ENCODE measurements at regions of chr3 and their contacts with region 1.

Region 1: DNA sequence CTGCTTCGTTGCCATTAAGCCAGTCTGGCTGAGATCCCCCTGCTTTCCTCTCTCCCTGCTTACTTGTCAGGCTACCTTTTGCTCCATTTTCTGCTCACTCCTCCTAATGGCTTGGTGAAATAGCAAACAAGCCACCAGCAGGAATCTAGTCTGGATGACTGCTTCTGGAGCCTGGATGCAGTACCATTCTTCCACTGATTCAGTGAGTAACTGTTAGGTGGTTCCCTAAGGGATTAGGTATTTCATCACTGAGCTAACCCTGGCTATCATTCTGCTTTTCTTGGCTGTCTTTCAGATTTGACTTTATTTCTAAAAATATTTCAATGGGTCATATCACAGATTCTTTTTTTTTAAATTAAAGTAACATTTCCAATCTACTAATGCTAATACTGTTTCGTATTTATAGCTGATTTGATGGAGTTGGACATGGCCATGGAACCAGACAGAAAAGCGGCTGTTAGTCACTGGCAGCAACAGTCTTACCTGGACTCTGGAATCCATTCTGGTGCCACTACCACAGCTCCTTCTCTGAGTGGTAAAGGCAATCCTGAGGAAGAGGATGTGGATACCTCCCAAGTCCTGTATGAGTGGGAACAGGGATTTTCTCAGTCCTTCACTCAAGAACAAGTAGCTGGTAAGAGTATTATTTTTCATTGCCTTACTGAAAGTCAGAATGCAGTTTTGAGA is 25.0 kb downstream of the CTNNB1 start:
- DNase-seq: no peak
- H3K4me3 ChIP-seq: no peak overlapping the region
- H3K4me3 Mint-ChIP-seq: no peak overlapping the region
- H3K27ac ChIP-seq: peak overlapping the region in 1 of 2 donors; percentile 36
- H3K27ac Mint-ChIP-seq: peak overlapping the region in 2 of 7 donors; percentile 31 to 49
- H3K4me1 ChIP-seq: peaks cover 11 to 20% of the 10 kb centered on the region in 2 donors
- H3K4me1 Mint-ChIP-seq: peaks cover 34% of the 10 kb centered on the region
- H3K27me3 ChIP-seq: no peaks in the 10 kb centered on the region
- H3K27me3 Mint-ChIP-seq: no peaks in the 10 kb centered on the region
- CTCF ChIP-seq: no peak

Region 2: GRCh38 chr3:40580494-40581091 is 643.7 kb before region 1 on chr3:
- intact Hi-C with region 1: loop called in 1 of 2 experiments (anchors 5 kb)
- DNase-seq: peak; percentile 46 to 60 (median 56)
- H3K4me3 ChIP-seq: no peak overlapping the region
- H3K4me3 Mint-ChIP-seq: no peak overlapping the region
- H3K27ac ChIP-seq: no peak overlapping the region
- H3K27ac Mint-ChIP-seq: no peak overlapping the region
- H3K4me1 ChIP-seq: no peaks in the 10 kb centered on the region
- H3K4me1 Mint-ChIP-seq: peaks cover 3% of the 10 kb centered on the region
- H3K27me3 ChIP-seq: no peaks in the 10 kb centered on the region
- H3K27me3 Mint-ChIP-seq: peaks cover 2 to 6% (median 3%) of the 10 kb centered on the region in 3 donors
- CTCF ChIP-seq: peak; percentile 98

Region 3: DNA sequence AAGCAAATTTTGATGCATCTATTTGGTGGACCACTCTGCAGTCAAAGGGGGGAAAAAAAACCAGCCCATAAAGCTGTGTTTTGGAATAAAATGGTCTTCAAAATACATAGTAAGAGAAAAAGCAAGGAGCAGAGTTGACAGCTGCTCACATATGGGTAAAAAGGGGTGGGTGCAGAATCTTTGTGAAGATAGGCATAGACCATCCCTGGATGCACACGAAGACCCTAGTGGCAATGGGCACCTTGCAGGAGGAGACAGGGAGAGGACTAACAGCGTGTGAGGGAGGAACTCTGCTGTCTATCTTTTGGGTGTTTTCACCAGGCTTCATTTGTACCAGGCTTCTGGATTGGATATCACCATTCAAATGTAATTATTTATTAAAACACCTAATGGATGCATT is 18.9 kb after region 1 on chr3:
- intact Hi-C with region 1: loop called in 1 of 2 experiments (anchors 2 kb)
- DNase-seq: no peak
- H3K4me3 ChIP-seq: no peak overlapping the region
- H3K4me3 Mint-ChIP-seq: no peak overlapping the region
- H3K27ac ChIP-seq: no peak overlapping the region
- H3K27ac Mint-ChIP-seq: peak overlapping the region in 3 of 7 donors; percentile 22 to 86 (median 36)
- H3K4me1 ChIP-seq: no peaks in the 10 kb centered on the region
- H3K4me1 Mint-ChIP-seq: no peaks in the 10 kb centered on the region
- H3K27me3 ChIP-seq: no peaks in the 10 kb centered on the region
- H3K27me3 Mint-ChIP-seq: no peaks in the 10 kb centered on the region
- CTCF ChIP-seq: no peak